Activated CD4-positive, alpha-beta memory T cell treated with anti-CD3 and anti-CD28 coated beads for 36 hours (primary cell): ENCODE measurements at regions of chr1 and their contacts with region 1.

Region 1: GRCh38 chr1:201709564-201710295 is 119.2 kb upstream of the IPO9 start:
- DNase-seq: peak; percentile 69
- H3K4me3 Mint-ChIP-seq: no peak overlapping the region
- H3K27ac Mint-ChIP-seq: no peak overlapping the region
- H3K4me1 Mint-ChIP-seq: no peaks in the 10 kb centered on the region
- H3K27me3 Mint-ChIP-seq: no peaks in the 10 kb centered on the region

Region 2: GRCh38 chr1:201719812-201720521 is 10.2 kb after region 1 on chr1:
- CTCF ChIA-PET with region 1: interaction called, 15 read pairs
- POLR2A ChIA-PET with region 1: no interaction called
- intact Hi-C with region 1: no loop called
- DNase-seq: no peak
- H3K4me3 Mint-ChIP-seq: no peak overlapping the region
- H3K27ac Mint-ChIP-seq: no peak overlapping the region
- H3K4me1 Mint-ChIP-seq: no peaks in the 10 kb centered on the region
- H3K27me3 Mint-ChIP-seq: peaks cover under 1% of the 10 kb centered on the region

Region 3: DNA sequence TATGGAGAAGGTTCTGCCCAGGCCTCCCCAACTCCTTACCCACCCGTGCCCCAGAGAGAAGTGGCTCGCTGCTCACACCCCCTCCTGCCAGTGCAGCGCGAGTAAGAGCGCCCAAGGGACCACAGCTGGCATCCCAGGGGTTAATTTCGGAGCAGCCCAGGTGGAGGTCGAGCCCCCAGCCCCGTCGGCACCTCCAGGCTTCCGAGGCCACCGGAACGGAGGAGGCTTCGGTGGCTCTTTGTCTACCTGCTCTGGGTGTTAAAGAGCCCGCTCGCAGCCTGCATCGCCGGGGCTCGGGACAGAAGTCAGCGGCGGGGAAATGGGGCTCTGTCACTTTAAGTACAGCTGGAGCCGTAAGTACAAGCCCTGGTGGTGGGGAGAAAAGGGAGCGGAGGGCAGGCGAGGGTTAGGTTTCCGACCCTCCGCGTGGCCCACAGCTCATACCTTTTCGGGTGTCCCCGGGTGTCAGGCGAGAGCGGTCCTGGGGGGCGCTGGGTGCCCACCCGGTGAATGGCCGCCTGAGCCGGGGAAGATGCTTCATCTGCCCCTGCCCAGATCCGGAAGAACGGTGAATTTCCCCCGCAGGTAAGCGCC is 29.9 kb after region 1 on chr1:
- CTCF ChIA-PET with region 1: interaction called, 11 read pairs
- POLR2A ChIA-PET with region 1: no interaction called
- intact Hi-C with region 1: no loop called
- DNase-seq: peak; percentile 60
- H3K4me3 Mint-ChIP-seq: peak overlapping the region; percentile 75
- H3K27ac Mint-ChIP-seq: no peak overlapping the region
- H3K4me1 Mint-ChIP-seq: peaks cover 11% of the 10 kb centered on the region
- H3K27me3 Mint-ChIP-seq: peaks cover 4% of the 10 kb centered on the region

Region 4: DNA sequence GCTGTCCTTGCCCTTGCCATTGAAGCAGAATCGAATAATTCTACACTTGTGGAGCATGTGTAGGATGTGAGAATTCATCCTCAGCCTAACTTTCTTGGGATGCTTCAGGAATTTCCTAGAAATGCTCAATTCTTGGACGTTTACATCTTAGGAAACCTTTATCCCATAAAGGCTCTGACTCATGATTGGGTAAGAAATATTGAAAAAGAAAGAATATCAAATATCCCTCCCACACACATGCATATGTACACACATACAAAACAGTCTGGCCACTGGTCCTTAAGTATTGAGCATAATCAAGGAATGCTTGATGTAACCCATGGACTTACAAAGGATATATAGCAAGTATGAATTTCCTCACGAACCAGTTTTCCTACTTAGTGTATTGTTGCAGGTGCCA is 35.3 kb after region 1 on chr1:
- CTCF ChIA-PET with region 1: interaction called, 11 read pairs
- POLR2A ChIA-PET with region 1: no interaction called
- intact Hi-C with region 1: no loop called
- DNase-seq: no peak
- H3K4me3 Mint-ChIP-seq: no peak overlapping the region
- H3K27ac Mint-ChIP-seq: no peak overlapping the region
- H3K4me1 Mint-ChIP-seq: peaks cover 11% of the 10 kb centered on the region
- H3K27me3 Mint-ChIP-seq: peaks cover 4% of the 10 kb centered on the region

Region 5: GRCh38 chr1:201792534-201793305 is 83.0 kb after region 1 on chr1:
- CTCF ChIA-PET with region 1: interaction called, 298 read pairs
- POLR2A ChIA-PET with region 1: no interaction called
- intact Hi-C with region 1: loop called (anchors 1 kb)
- DNase-seq: peak; percentile 59
- H3K4me3 Mint-ChIP-seq: no peak overlapping the region
- H3K27ac Mint-ChIP-seq: no peak overlapping the region
- H3K4me1 Mint-ChIP-seq: no peaks in the 10 kb centered on the region
- H3K27me3 Mint-ChIP-seq: no peaks in the 10 kb centered on the region